ENCODE measurements at regions of chr17 and their contacts with region 1.

Region 1: DNA sequence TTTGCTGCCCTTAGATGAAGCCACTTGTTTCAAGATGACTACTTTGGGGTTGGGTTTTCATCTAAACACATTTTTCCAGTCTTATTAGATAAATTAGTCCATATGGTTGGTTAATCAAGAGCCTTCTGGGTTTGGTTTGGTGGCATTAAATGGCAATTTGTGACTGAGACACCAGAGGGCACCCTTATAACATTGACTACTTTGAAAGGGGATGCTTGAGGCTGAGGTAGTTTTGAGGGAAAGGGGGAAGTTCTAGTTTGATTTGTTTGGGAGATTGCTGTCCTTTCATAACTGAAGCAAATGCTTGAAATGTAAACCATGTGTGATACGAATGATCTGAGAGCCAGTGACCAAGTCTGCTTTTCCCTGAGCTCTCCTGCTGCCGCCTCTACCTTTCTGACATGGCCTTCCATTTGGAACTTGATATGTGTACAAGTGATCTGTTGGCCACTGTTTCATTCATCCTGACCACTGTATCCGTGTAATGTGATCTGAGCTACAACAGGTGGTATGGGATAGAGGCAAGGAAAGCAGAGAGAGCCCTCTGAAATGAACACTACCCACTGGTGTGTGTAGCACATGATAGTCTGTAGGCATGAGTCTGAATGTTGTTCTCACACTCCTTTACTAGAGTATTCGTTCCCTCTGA is 5.8 kb upstream of the RARA start:
- DNase-seq: peak in 4 of 5 donors; percentile 44 to 66 (median 60)
- H3K4me3 ChIP-seq: no peak overlapping the region
- H3K4me3 Mint-ChIP-seq: peak overlapping the region in 1 of 7 donors; percentile 1
- H3K27ac ChIP-seq: no peak overlapping the region
- H3K27ac Mint-ChIP-seq: peak overlapping the region in 7 of 8 donors; percentile 2 to 80 (median 51)
- H3K4me1 ChIP-seq: peaks cover 29% of the 10 kb centered on the region
- H3K4me1 Mint-ChIP-seq: peaks cover 11 to 17% (median 16%) of the 10 kb centered on the region in 3 donors
- H3K27me3 ChIP-seq: no peaks in the 10 kb centered on the region
- H3K27me3 Mint-ChIP-seq: no peaks in the 10 kb centered on the region

Region 2: DNA sequence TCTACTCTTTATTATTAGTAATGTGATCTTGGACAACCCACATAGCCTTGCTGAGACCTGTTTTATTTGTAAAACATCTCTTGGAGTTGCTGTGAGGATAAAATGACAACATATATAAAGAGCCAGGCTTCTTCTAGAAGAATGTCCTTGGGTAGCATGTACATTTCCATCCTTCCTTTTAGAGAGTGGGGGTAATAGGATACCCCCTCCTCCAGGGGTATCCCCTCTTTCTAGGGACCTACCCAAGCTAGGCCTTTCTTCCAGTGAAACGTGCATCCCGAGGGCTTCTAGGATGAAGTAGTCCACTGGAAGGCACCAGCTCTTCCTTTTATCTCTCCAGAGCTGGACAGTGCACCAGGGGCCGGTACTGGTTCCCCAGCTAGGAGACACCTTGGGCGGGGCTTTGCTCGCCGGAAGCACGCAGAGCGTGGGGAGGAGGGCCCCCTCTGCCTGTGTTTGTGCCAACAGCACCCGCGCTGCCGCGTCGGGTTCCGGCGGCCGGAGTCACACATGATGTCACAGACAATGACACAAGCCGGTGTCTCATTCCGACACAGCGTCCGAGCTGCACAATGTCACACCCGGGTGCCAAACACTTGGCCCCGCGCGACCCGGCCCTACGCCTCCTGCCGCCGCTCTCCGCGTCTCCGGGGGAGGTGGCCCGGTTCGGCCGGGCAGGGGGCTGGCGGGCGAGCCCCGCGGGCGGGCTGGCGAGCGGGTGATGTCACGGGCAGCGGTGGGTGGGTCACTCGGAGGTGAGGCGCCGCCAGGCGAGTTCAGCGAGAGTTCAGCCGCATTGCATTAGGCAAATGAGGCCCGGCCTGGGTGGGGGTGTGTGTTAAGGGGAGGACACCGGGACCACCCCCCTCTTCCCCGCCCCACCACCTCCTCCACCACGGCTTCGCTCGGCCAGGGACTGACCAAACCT is 38.0 kb after region 1 on chr17:
- CTCF ChIA-PET with region 1: interaction called, 10 read pairs
- POLR2A ChIA-PET with region 1: no interaction called
- DNase-seq: peak; percentile 86 to 94 (median 88)
- H3K4me3 ChIP-seq: peak overlapping the region; percentile 37
- H3K4me3 Mint-ChIP-seq: peak overlapping the region; percentile 60 to 92 (median 83)
- H3K27ac ChIP-seq: peak overlapping the region; percentile 67
- H3K27ac Mint-ChIP-seq: peak overlapping the region; percentile 92 to 98 (median 97)
- H3K4me1 ChIP-seq: peaks cover 66% of the 10 kb centered on the region
- H3K4me1 Mint-ChIP-seq: peaks cover 66 to 84% (median 73%) of the 10 kb centered on the region in 3 donors
- H3K27me3 ChIP-seq: no peaks in the 10 kb centered on the region
- H3K27me3 Mint-ChIP-seq: no peaks in the 10 kb centered on the region

Region 3: GRCh38 chr17:40371261-40371929 is 68.3 kb after region 1 on chr17:
- CTCF ChIA-PET with region 1: no interaction called
- POLR2A ChIA-PET with region 1: no interaction called
- DNase-seq: peak in 2 of 5 donors; percentile 28 to 40
- H3K4me3 ChIP-seq: no peak overlapping the region
- H3K4me3 Mint-ChIP-seq: peak overlapping the region in 2 of 7 donors; percentile 16 to 43
- H3K27ac ChIP-seq: no peak overlapping the region
- H3K27ac Mint-ChIP-seq: peak overlapping the region in 2 of 8 donors; percentile 68 to 75
- H3K4me1 ChIP-seq: no peaks in the 10 kb centered on the region
- H3K4me1 Mint-ChIP-seq: peaks cover 3 to 6% (median 4%) of the 10 kb centered on the region in 3 donors
- H3K27me3 ChIP-seq: no peaks in the 10 kb centered on the region
- H3K27me3 Mint-ChIP-seq: peaks cover under 1 to 4% of the 10 kb centered on the region in 2 donors

Measured in CD8-positive, alpha-beta memory T cell (primary cell).